Left cardiac atrium (tissue), 4 donors: ENCODE measurements at regions of chr19 and their contacts with region 1.

Region 1: GRCh38 chr19:45643024-45643926 is 4.1 kb upstream of the EML2 start:
- DNase-seq: peak; percentile 82
- ATAC-seq: peak; percentile 48 to 50

Region 2: DNA sequence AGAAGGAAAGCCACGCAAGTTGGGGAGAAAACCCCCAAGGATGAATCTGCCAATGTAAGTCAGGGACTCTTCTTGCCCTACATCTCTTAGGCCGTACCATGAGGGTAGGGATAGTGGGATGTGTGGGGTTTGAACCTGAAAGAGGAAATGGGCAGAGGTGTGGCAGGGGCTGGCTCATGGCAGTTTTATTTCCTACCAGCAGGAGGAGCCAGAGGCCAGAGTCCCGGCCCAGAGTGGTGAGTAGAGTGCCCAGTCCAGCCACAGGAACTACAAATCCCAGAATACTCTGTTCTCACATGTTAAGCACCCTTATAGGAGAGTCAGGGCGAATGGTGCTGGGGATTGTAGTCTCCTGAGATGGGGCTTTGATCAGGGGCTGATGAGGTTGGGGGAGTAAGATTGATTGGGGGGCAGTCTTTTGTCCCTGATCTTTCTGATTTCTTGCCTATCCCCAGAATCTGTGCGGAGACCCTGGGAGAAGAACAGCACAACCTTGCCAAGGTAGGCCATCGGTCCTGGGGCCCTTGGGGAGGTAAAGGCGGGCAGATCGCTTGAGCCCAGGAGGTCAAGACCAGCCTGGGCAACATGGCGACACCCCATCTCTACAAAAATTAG is 119.5 kb before region 1 on chr19:
- intact Hi-C with region 1: loop called in 1 of 2 experiments (anchors 5 kb)
- DNase-seq: peak; percentile 77
- ATAC-seq: peak; percentile 89 to 95

Region 3: DNA sequence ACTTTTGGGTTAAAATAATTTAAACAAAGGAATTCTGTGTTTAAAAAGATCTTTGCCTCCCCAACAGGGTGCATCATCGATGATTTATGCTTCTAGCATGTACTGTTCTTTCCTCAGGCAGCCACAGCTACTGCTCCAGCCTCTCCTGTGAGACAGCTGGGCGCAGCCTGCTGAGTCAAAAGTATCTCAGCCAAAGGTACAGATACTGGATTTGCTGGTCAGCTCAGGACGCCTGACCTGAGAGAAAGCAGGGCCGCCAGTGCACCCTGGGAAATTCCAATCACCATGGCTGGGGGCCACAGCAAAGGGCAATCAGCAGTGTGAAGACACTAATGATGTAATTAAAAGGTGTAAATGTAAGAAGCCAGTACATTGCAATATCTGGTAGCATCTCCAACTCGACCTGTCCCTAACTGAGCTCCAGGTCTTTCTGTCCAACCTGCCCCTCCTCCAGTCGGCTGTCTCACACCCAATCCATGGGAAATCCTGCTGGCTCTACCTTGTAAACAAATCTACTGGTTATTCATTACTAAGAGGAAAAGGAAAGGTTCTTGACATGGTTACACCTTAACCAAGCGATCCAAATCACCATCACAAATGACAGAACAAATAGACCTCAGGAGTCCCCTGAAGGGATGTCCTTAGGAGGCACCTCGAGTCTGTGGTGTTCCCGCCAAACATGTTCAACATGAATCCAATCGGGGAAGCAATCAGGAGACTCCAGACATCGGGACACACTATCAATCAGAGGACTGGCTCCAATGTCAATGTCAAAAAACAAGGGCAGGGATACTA is 66.0 kb before region 1 on chr19:
- intact Hi-C with region 1: no loop called
- DNase-seq: peak; percentile 57
- ATAC-seq: peak; percentile 69 to 95

Region 4: DNA sequence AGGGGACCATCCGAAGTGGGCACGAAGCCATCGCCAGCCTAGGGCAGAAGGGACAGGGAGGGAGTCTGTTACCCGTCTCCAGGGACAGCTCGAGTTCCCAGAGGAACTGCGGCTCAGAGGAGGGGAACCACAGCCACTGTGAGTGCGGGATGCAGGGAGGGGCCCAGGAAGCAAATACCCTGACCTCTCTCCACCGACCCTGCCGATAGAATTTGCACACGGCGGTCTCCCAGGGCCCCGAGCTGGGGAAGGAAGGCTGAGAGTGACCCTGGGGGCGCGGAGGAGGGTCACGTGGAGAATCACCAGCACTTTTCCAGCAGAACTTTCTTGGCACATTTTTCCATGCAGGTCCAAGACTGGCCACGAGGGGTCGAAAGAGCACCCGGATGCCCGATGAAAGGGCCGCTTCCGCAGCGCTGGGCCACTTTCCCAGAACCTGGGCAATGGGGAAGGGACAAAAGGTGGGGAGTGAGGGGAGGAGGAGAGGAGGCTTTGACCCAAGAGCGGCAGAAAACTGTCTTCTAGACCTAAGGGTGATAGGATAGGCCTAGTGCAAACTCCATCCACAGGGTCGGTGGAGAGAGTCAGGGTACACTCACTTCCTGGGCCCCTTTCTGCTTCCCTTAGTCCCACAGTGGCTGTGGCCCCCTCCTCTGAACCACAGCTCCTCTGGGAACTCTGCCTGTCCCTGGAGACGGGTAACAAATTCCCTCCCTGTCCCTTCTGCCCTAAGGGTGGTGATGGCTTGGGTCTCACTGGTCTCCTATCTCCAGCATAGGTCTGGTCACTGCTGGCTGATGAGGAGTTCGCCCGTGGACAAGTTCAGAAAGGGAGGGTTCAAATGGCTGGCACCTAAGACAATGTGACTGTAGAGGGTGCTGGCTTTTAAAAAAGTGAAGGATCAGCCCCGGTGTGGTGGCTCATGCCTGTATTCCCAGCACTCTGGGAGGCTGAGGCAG is 35.9 kb before region 1 on chr19:
- intact Hi-C with region 1: loop called (anchors 5 kb)
- DNase-seq: peak; percentile 82
- ATAC-seq: peak; percentile 83 to 86